ENCODE measurements at regions of chr11 and their contacts with region 1.

Region 1: GRCh38 chr11:10750838-10751580 is at the start of gene CTR9:
- DNase-seq: peak; percentile 95
- H3K4me3 Mint-ChIP-seq: peak within 1 kb of the TSS; percentile 93
- H3K27ac Mint-ChIP-seq: peak within 1 kb of the TSS; percentile 87
- H3K4me1 Mint-ChIP-seq: peaks cover 14% of the 10 kb centered on the region
- H3K27me3 Mint-ChIP-seq: no peaks in the 10 kb centered on the region
- total RNA-seq, gene CTR9: 28.7 to 29.7 TPM

Region 2: DNA sequence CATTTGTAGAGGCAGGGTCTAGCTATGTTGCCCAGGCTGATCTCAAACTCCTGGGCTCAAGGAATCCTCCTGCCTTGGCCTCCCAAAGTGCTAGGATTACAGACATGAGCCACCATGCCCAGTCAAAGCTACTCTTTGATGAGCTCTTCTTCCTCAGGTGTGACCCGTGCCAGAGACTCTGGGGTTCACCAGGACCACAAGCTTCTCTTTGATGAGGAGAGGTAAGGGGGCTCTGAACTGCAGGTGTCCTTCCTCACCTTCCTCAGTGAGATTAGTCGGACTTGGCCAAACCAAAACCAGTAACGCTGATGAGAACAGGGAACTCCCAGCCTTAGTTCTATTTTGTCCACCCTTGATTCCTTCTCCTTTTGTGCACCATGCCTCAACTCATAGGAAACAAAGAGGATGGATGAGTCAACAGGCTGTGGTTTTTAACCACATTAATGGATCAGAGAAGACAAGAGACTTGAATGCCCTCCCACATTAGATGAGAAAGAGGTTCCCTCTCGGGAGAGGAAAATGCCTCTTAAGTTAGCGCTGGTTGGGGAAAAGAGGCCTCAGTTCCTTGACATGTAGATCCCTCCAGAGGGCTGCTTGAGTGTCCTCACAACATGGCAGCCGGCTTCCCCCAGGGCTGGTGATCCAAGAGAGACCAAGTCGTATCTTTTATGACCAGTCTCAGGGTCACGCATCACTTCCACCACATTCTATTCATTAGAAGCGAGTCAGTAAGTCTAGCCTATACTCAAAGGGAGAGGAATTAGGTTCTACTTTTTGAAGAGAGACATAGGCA is 25.7 kb before region 1 on chr11:
- CTCF ChIA-PET with region 1: no interaction called
- intact Hi-C with region 1: no loop called
- DNase-seq: peak; percentile 43
- H3K4me3 Mint-ChIP-seq: no peak overlapping the region
- H3K27ac Mint-ChIP-seq: peak overlapping the region; percentile 46
- H3K4me1 Mint-ChIP-seq: peaks cover 22% of the 10 kb centered on the region
- H3K27me3 Mint-ChIP-seq: no peaks in the 10 kb centered on the region

Region 3: DNA sequence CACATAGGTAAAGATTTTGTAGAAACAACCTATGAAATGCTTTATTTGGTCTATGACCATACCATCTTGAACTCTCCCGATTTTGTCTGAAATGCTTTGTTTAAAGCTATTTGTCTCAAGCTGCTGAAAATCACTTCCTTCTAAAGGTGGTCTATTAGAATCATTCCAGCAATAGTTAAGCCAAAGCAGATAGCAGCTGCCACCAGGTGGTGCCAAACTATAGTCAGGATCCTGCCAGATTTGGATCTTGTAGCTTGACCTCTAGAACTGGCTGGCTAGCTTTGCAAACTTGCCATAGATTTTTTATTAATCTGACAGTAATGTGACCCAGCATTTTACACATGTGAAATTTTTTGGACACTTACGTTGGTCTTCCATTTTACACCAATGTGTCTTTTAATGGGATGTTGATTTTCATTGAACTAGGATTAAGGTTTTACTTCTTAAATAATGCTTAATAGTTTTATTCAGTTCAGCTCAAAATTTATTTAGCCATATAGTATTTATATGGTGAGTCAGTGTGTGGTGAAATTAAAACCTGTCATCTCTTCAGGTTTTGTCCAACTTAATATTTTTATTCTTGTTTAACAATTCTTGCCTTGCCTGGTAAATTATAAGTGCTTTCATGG is 19.7 kb after region 1 on chr11:
- CTCF ChIA-PET with region 1: interaction called, 26 read pairs
- intact Hi-C with region 1: no loop called
- DNase-seq: peak; percentile 42
- H3K4me3 Mint-ChIP-seq: no peak overlapping the region
- H3K27ac Mint-ChIP-seq: no peak overlapping the region
- H3K4me1 Mint-ChIP-seq: no peaks in the 10 kb centered on the region
- H3K27me3 Mint-ChIP-seq: no peaks in the 10 kb centered on the region

Region 4: DNA sequence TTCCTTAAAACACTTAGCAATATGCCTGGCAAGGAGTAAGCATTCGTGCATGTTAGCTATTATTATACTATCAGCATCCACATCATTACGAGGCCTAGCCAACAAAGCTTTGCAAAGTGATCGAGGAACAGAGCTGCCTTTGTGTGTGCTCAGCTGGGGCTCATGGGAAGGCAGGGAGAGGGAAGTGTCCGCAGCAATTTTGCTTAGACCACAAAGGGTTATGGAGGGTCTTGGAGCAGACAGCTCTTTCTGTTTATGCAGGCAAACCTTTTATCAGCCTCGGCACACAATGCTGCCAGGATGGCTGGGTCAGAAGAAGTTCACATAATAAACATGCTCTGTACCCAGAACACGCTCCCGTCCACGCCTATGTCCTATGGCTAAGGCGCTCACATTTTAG is 1268.3 kb after region 1 on chr11:
- CTCF ChIA-PET with region 1: no interaction called
- intact Hi-C with region 1: no loop called
- DNase-seq: no peak
- H3K4me3 Mint-ChIP-seq: no peak overlapping the region
- H3K27ac Mint-ChIP-seq: no peak overlapping the region
- H3K4me1 Mint-ChIP-seq: no peaks in the 10 kb centered on the region
- H3K27me3 Mint-ChIP-seq: peaks cover 13% of the 10 kb centered on the region

Measured in activated naive CD4-positive, alpha-beta T cell treated with anti-CD3 and anti-CD28 coated beads for 36 hours (primary cell).